Posterior vena cava (tissue), 2 donors: ENCODE measurements at regions of chr3 and their contacts with region 1.

Region 1: GRCh38 chr3:30511524-30512278 is 94.7 kb upstream of the TGFBR2 start:
- DNase-seq: peak; percentile 77

Region 2: GRCh38 chr3:30440147-30440604 is 71.5 kb before region 1 on chr3:
- intact Hi-C with region 1: loop called in 1 of 2 experiments (anchors 10 kb)
- DNase-seq: no peak

Region 3: GRCh38 chr3:30606301-30607031 is 94.8 kb after region 1 on chr3 and contains the start of gene TGFBR2:
- intact Hi-C with region 1: loop called in 1 of 2 experiments (anchors 10 kb)
- DNase-seq: peak; percentile 99
- total RNA-seq, gene TGFBR2: 243 to 291 TPM

Region 4: GRCh38 chr3:30693470-30694120 is 181.9 kb after region 1 on chr3:
- intact Hi-C with region 1: loop called in 1 of 2 experiments (anchors 10 kb)
- DNase-seq: no peak